GM12878 (cell line): ENCODE measurements at regions of chr6 and their contacts with region 1.

Region 1: GRCh38 chr6:150813319-150813992 is 52.0 kb upstream of the MTHFD1L start:
- DNase-seq: peak; percentile 78
- ATAC-seq: peak; percentile 81
- H3K4me3 ChIP-seq: no peak overlapping the region
- H3K27ac ChIP-seq: peak overlapping the region; percentile 79
- H3K4me1 ChIP-seq: peaks cover 19% of the 10 kb centered on the region
- H3K27me3 ChIP-seq: no peaks in the 10 kb centered on the region
- CTCF ChIP-seq: no peak
- EP300 ChIP-seq: peak in 1 of 2 experiments; percentile 16; a peak in 1 of 4 replicates
- POLR2A ChIP-seq: no peak
- RAD21 ChIP-seq: 0 out of 2 replicates have a peak, but pooled peaks have one; percentile 9

Region 2: DNA sequence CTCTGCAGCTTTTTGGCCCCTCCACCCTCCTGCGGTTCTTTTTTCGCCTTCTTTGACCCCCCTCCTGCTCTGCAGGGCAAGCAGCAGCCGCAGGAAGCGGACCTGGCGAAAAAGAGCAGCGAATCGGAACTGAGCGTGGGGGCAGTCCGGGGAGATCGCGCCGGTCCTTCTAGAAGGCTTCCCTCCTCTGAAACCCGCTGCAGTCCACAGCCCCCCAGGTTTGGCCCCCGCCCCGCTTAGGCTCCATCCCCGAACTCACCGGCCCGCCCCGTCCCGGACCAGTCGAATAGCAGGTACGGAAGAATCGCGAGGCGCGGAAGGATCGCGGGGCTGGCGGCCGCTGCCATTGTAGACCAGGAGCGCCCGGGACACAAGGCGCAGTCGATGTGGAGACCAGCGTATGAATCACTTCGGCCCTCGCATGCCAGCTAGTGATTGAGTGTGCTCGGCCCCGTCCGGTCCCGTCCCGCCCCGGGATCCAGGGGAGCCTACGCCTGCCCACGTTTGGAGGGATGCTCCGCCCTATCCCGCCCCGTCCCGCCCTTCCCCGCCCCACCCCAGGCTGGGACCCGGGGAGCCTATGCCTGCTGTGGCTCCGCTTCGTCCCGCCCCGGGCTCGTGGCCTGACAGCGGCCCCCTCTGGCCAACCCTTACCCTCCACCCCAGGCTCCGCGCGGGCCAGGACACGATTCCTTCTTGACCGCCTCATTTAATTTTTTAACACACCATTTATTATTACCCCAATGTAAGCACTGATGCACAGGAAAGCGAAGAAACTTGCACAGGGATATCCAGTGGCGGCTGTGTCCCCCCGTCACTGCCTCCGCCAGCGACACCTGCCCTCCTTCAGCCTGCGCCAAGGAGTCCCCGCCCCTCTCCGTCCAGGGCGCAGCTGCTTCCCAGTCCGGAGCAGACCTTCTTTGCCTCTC is 744.5 kb before region 1 on chr6 and contains the start of gene ULBP3:
- CTCF ChIA-PET with region 1: interaction called, 4 read pairs
- POLR2A ChIA-PET with region 1: no interaction called
- RAD21 ChIA-PET with region 1: interaction called, 4 read pairs
- SMC1A ChIA-PET with region 1: interaction called, 3 read pairs
- in situ Hi-C with region 1: loop called (anchors 5 kb)
- intact Hi-C with region 1: no loop called
- DNase-seq: no peak
- ATAC-seq: peak; percentile 93
- H3K4me3 ChIP-seq: peak within 1 kb of the TSS; percentile 57
- H3K27ac ChIP-seq: no peak within 1 kb of the TSS
- H3K4me1 ChIP-seq: no peaks in the 10 kb centered on the region
- H3K27me3 ChIP-seq: peaks cover 0 to 2% of the 10 kb centered on the region in 2 experiments; a peak in 1 of 4 replicates
- CTCF ChIP-seq: peak; percentile 13 to 52 (median 44); a peak in 3 of 6 replicates
- EP300 ChIP-seq: no peak
- POLR2A ChIP-seq: peak; percentile 38; the same call in 1 of the 2 replicates
- RAD21 ChIP-seq: no peak
- polyA plus RNA-seq, gene ULBP3: not detected

Region 3: GRCh38 chr6:150395398-150396009 is 418.0 kb before region 1 on chr6:
- CTCF ChIA-PET with region 1: interaction called, 49 read pairs
- POLR2A ChIA-PET with region 1: interaction called, 3 read pairs
- RAD21 ChIA-PET with region 1: interaction called, 19 read pairs
- SMC1A ChIA-PET with region 1: interaction called, 12 read pairs
- in situ Hi-C with region 1: no loop called
- intact Hi-C with region 1: no loop called
- DNase-seq: no peak
- ATAC-seq: peak; percentile 98
- H3K4me3 ChIP-seq: no peak overlapping the region
- H3K27ac ChIP-seq: no peak overlapping the region
- H3K4me1 ChIP-seq: no peaks in the 10 kb centered on the region
- H3K27me3 ChIP-seq: no peaks in the 10 kb centered on the region; a peak in 2 of 4 replicates
- CTCF ChIP-seq: peak; percentile 71 to 77 (median 71)
- EP300 ChIP-seq: no peak
- POLR2A ChIP-seq: no peak
- RAD21 ChIP-seq: peak; percentile 76

Region 4: DNA sequence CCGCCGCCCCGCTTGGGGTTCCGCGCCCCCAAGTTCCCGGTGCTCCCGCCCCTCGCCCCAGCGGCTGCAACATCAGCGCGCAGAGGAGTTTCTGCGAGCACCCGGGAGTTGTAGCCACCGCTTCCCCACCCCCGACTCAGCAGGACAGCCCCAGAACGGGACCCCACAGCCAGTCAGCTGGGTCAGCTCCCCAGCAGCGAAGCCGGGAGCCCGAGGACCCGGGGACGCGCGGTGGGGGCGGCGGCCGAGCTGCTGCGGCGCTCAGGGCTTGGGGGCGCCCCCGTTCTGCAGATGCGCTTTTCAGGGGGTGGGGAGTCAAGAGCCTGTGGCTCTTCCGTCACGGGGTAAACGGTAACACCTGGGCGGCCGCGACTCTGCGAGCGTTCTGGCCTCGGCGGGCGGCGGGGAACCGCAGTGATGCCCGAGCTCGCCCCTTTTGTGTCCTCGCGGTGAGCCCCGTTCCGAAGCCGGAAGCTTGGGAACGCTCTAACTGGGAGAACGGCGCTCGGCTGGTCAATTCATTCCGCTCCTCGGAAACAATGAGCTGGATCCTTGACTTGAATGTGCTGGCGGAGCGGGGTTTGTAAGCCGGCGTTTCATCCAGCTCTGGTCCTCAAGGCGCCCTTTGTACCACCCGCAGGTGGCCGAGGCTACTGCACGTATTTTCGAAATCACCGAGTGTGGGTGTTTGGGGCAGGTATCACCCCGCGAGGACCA is 213.0 kb before region 1 on chr6:
- CTCF ChIA-PET with region 1: interaction called, 6 read pairs
- POLR2A ChIA-PET with region 1: interaction called, 6 read pairs
- RAD21 ChIA-PET with region 1: interaction called, 14 read pairs
- SMC1A ChIA-PET with region 1: interaction called, 7 read pairs
- in situ Hi-C with region 1: no loop called
- intact Hi-C with region 1: loop called (anchors 10 kb)
- DNase-seq: no peak
- ATAC-seq: peak; percentile 84
- H3K4me3 ChIP-seq: peak overlapping the region; percentile 75
- H3K27ac ChIP-seq: no peak overlapping the region
- H3K4me1 ChIP-seq: peaks cover 4% of the 10 kb centered on the region; the same call in 1 of the 2 replicates
- H3K27me3 ChIP-seq: peaks cover 2 to 7% of the 10 kb centered on the region in 2 experiments
- CTCF ChIP-seq: peak; percentile 23 to 54 (median 54)
- EP300 ChIP-seq: no peak
- POLR2A ChIP-seq: peak; percentile 43; the same call in 1 of the 2 replicates
- RAD21 ChIP-seq: peak; percentile 45

Region 5: GRCh38 chr6:150720774-150721233 is 92.7 kb before region 1 on chr6:
- CTCF ChIA-PET with region 1: interaction called, 11 read pairs
- POLR2A ChIA-PET with region 1: no interaction called
- RAD21 ChIA-PET with region 1: interaction called, 10 read pairs
- SMC1A ChIA-PET with region 1: interaction called, 10 read pairs
- in situ Hi-C with region 1: no loop called
- intact Hi-C with region 1: loop called (anchors 2 kb)
- DNase-seq: peak; percentile 94
- ATAC-seq: peak; percentile 96
- H3K4me3 ChIP-seq: 0 out of 2 replicates have a peak overlapping the region, but pooled peaks have one; percentile 7
- H3K27ac ChIP-seq: peak overlapping the region; percentile 32
- H3K4me1 ChIP-seq: peaks cover 19% of the 10 kb centered on the region
- H3K27me3 ChIP-seq: no peaks in the 10 kb centered on the region
- CTCF ChIP-seq: peak in 1 of 3 experiments; percentile 16; a peak in 1 of 6 replicates
- EP300 ChIP-seq: peak; percentile 77 to 98
- POLR2A ChIP-seq: no peak
- RAD21 ChIP-seq: peak; percentile 40

Region 6: GRCh38 chr6:150891888-150892485 is 78.5 kb after region 1 on chr6:
- CTCF ChIA-PET with region 1: interaction called, 16 read pairs
- POLR2A ChIA-PET with region 1: no interaction called
- RAD21 ChIA-PET with region 1: interaction called, 5 read pairs
- SMC1A ChIA-PET with region 1: interaction called, 5 read pairs
- in situ Hi-C with region 1: no loop called
- intact Hi-C with region 1: no loop called
- DNase-seq: peak; percentile 34
- ATAC-seq: peak; percentile 69
- H3K4me3 ChIP-seq: no peak overlapping the region
- H3K27ac ChIP-seq: no peak overlapping the region
- H3K4me1 ChIP-seq: peaks cover 40% of the 10 kb centered on the region
- H3K27me3 ChIP-seq: no peaks in the 10 kb centered on the region
- CTCF ChIP-seq: peak; percentile 76 to 89 (median 88)
- EP300 ChIP-seq: no peak
- POLR2A ChIP-seq: no peak
- RAD21 ChIP-seq: peak; percentile 90

Region 7: GRCh38 chr6:151335930-151336329 is 522.5 kb after region 1 on chr6:
- CTCF ChIA-PET with region 1: interaction called, 13 read pairs
- POLR2A ChIA-PET with region 1: no interaction called
- RAD21 ChIA-PET with region 1: interaction called, 10 read pairs
- SMC1A ChIA-PET with region 1: no interaction called
- in situ Hi-C with region 1: no loop called
- intact Hi-C with region 1: no loop called
- DNase-seq: no peak
- ATAC-seq: no peak
- H3K4me3 ChIP-seq: no peak overlapping the region
- H3K27ac ChIP-seq: no peak overlapping the region
- H3K4me1 ChIP-seq: no peaks in the 10 kb centered on the region
- H3K27me3 ChIP-seq: no peaks in the 10 kb centered on the region
- CTCF ChIP-seq: no peak
- EP300 ChIP-seq: no peak
- POLR2A ChIP-seq: no peak
- RAD21 ChIP-seq: no peak

Region 8: GRCh38 chr6:151940307-151940706 is 1126.9 kb after region 1 on chr6:
- CTCF ChIA-PET with region 1: no interaction called
- POLR2A ChIA-PET with region 1: no interaction called
- RAD21 ChIA-PET with region 1: no interaction called
- SMC1A ChIA-PET with region 1: no interaction called
- in situ Hi-C with region 1: no loop called
- intact Hi-C with region 1: no loop called
- DNase-seq: no peak
- ATAC-seq: no peak
- H3K4me3 ChIP-seq: no peak overlapping the region
- H3K27ac ChIP-seq: no peak overlapping the region
- H3K4me1 ChIP-seq: no peaks in the 10 kb centered on the region
- H3K27me3 ChIP-seq: no peaks in the 10 kb centered on the region; a peak in 1 of 4 replicates
- CTCF ChIP-seq: no peak
- EP300 ChIP-seq: no peak
- POLR2A ChIP-seq: no peak
- RAD21 ChIP-seq: no peak